Gastrocnemius medialis (tissue), 4 donors: ENCODE measurements at regions of chr4 and their contacts with region 1.

Region 1: DNA sequence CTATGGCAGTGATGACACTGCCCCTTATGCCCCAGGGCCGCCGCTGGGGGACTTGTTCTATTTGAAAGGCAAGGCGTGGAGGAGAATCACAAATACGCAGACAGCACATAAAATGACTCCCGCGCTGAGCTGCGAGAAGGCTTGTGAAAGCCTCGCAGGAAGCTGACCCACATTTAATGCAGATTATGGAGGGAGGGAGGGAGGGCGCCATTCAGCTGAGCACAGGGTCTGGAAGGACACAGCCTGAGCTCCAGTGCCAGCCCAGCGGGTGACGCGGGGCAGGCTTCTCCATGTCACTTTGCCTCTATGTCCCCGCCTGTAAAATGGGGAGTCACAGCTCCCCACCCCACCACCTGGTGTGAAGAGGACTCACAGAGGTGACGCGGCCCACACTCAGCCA is 14.3 kb downstream of the ABLIM2 start:
- DNase-seq: peak; percentile 75 to 89
- ATAC-seq: peak; percentile 40 to 58
- H3K4me3 ChIP-seq: peak overlapping the region; percentile 2 to 30 (median 21)
- H3K27ac ChIP-seq: peak overlapping the region; percentile 94 to 99 (median 96)
- H3K4me1 ChIP-seq: peaks cover 52 to 63% of the 10 kb centered on the region in 2 donors
- H3K27me3 ChIP-seq: no peaks in the 10 kb centered on the region
- CTCF ChIP-seq: peak in 1 of 5 experiments; percentile 23
- POLR2A ChIP-seq: peak; percentile 61 to 78

Region 2: DNA sequence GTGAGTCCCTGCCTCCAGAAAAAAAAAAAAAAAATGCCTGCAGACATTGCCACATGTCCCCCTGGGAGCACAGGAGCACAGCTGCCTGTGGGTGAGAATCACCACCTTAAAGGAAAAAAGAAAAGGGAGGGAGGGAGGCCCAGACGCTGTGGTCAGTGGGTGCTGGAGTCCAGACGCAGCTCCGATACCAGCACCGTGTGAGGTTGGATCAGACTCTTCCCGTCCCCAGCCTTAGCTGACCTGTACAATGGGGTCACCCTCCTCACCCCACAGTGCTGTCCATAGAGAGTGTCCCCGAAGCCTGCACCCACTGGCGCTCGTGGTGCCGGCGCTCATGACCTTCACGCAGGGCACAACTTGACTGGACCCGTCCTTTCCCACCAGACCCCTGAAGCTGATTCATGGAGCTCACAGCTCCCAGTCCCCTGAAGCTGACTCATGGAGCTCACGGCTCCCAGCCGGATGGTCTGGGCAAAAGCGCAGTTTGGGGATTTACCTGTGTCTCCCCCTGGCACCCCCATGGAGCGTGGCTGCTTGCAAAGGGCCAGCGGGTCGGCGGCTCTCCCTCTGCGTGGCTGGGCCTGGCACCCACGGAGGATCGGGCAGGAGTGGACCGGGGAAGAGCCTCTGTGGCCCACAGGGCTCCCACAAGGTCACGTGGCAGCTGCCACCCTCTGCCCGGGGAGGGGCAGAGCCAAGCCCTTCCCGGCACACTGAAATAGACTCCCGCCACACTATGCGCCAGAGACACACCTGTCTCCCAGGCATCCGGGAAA is 17.1 kb before region 1 on chr4:
- in situ Hi-C with region 1: no loop called
- intact Hi-C with region 1: loop called (anchors 1 kb)
- DNase-seq: peak; percentile 81 to 91
- ATAC-seq: peak; percentile 69 to 71
- H3K4me3 ChIP-seq: peak overlapping the region; percentile 67 to 78 (median 78)
- H3K27ac ChIP-seq: peak overlapping the region; percentile 93 to 100 (median 98)
- H3K4me1 ChIP-seq: peaks cover 46 to 50% of the 10 kb centered on the region in 2 donors
- H3K27me3 ChIP-seq: no peaks in the 10 kb centered on the region
- CTCF ChIP-seq: no peak
- POLR2A ChIP-seq: peak; percentile 88 to 93